PC-9 (cell line): ENCODE measurements at regions of chr12 and their contacts with region 1.

Region 1: GRCh38 chr12:51326762-51327439 is 2.9 kb upstream of the BIN2 start:
- DNase-seq: peak; percentile 53
- H3K4me3 ChIP-seq: no peak overlapping the region
- H3K27ac ChIP-seq: peak overlapping the region; percentile 72
- H3K4me1 ChIP-seq: peaks cover 53% of the 10 kb centered on the region
- H3K27me3 ChIP-seq: no peaks in the 10 kb centered on the region
- CTCF ChIP-seq: no peak

Region 2: GRCh38 chr12:51270067-51270970 is 56.6 kb before region 1 on chr12 and contains the start of gene SMAGP:
- CTCF ChIA-PET with region 1: no interaction called
- POLR2A ChIA-PET with region 1: no interaction called
- intact Hi-C with region 1: loop called (anchors 5 kb)
- DNase-seq: peak; percentile 73 to 92
- H3K4me3 ChIP-seq: peak within 1 kb of the TSS; percentile 91
- H3K27ac ChIP-seq: peak within 1 kb of the TSS; percentile 95
- H3K4me1 ChIP-seq: peaks cover 36% of the 10 kb centered on the region
- H3K27me3 ChIP-seq: no peaks in the 10 kb centered on the region
- CTCF ChIP-seq: no peak
- total RNA-seq, gene SMAGP: 36.3 and 42.9 TPM in 2 replicates

Region 3: DNA sequence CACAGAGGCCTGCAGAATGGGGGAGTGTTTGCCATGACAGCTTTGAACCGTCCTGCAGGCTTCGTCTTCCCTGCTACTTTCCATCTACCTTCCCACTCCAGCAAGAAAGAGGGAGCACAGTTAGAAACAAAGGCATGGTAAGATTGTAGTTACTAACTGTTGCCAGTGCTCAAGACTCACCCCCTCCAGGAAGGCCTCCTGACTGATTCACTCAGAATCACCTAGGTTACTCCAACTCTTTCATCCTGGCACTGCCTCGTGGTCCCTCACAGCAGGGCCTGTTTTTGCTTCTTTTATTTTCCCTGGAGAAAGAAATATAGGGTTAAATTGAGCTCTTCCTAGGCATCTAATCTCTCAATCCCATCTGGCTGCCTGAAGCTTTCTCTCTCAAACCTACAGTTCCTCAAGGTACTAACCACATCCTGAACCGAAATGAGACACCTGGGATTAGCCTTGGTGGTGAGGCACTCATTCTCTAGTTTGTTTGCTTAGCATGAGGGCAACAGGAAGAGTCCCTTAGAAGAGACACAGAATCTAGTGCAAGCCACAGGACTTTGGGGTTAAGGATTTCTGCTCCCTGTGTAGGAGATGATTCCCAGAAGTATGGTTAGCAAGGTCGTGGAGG is 56.5 kb after region 1 on chr12:
- CTCF ChIA-PET with region 1: interaction called, 11 read pairs
- POLR2A ChIA-PET with region 1: no interaction called
- intact Hi-C with region 1: no loop called
- DNase-seq: peak; percentile 28 to 89
- H3K4me3 ChIP-seq: no peak overlapping the region
- H3K27ac ChIP-seq: peak overlapping the region; percentile 52
- H3K4me1 ChIP-seq: peaks cover 59% of the 10 kb centered on the region
- H3K27me3 ChIP-seq: no peaks in the 10 kb centered on the region
- CTCF ChIP-seq: no peak

Region 4: DNA sequence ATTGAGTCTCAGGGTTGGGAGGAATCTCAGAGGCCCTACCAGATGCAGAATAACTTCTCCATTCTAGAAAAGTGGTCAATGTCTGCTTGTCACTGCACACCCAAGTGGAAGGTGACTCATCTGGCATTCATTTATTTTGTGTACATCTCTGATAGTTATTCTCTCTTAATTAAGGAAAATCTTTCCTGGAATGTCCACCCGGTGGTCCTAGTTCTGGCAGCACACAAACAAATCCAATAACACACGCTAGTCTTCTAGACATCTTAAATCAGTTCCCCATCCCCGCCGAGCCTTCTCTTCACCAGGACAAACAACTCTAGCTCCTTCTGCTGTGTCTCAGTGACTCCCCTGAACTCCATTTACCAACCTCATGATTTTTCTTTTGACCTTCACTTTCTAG is 214.1 kb after region 1 on chr12:
- CTCF ChIA-PET with region 1: no interaction called
- POLR2A ChIA-PET with region 1: interaction called, 10 read pairs
- intact Hi-C with region 1: no loop called
- DNase-seq: no peak
- H3K4me3 ChIP-seq: no peak overlapping the region
- H3K27ac ChIP-seq: no peak overlapping the region
- H3K4me1 ChIP-seq: no peaks in the 10 kb centered on the region
- H3K27me3 ChIP-seq: peaks cover 88% of the 10 kb centered on the region
- CTCF ChIP-seq: no peak

Region 5: GRCh38 chr12:52082988-52083637 is 756.2 kb after region 1 on chr12:
- CTCF ChIA-PET with region 1: no interaction called
- POLR2A ChIA-PET with region 1: no interaction called
- intact Hi-C with region 1: no loop called
- DNase-seq: peak in 1 of 2 experiments; percentile 57
- H3K4me3 ChIP-seq: no peak overlapping the region
- H3K27ac ChIP-seq: no peak overlapping the region
- H3K4me1 ChIP-seq: no peaks in the 10 kb centered on the region
- H3K27me3 ChIP-seq: no peaks in the 10 kb centered on the region
- CTCF ChIP-seq: peak; percentile 99